ENCODE measurements at regions of chr19 and their contacts with region 1.

Region 1: DNA sequence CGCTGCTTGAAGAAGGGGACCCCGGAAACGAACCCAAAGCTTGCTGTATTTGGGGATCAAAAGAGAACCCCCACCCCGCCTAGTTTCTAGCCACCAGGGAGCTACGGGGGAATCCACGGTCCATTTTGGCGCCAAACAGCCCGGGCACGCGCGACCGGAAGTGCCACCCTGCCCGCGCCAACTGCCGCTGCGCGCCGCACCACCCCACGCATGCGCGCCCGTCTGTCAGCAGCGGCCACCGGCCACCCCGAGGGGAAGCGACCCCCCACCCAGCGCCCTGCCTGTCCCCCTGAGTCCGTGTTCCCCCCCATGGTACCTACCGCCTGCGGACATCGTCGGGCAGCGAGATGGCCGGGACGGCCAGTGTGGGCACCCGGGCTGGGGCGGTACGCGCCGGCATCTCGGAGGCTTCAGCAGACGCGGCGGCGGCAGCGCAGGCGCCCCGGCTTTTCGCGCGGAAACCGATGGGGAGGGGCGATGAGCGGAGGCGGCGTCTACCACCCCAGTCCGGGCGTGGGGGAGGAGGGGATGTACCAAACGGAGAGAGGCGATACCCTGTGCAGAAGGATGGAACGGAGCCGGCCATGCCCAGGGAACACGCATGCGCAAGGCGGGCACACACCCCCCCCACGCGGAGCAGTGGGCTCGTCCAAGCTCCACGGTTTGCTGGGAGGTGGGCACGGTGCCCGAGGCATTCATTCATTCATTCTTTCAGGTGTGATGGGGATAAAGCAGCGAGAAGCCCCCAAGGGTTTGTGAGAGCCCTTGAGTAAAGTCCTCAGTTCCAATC is at the start of gene DNMT1:
- DNase-seq: peak; percentile 94 to 98 (median 97)
- H3K4me3 ChIP-seq: peak within 1 kb of the TSS; percentile 18 to 95 (median 82)
- H3K27ac ChIP-seq: peak within 1 kb of the TSS; percentile 19 to 90 (median 67)
- H3K4me1 ChIP-seq: peaks cover 0 to 10% of the 10 kb centered on the region in 2 donors
- H3K27me3 ChIP-seq: no peaks in the 10 kb centered on the region
- CTCF ChIP-seq: peak in 1 of 6 experiments; percentile 3
- POLR2A ChIP-seq: peak; percentile 26 to 66
- total RNA-seq, gene DNMT1: 23.6 to 48.2 (median 33.8) TPM

Region 2: GRCh38 chr19:10135551-10136334 is 59.0 kb before region 1 on chr19:
- intact Hi-C with region 1: no loop called
- DNase-seq: no peak
- H3K4me3 ChIP-seq: no peak overlapping the region
- H3K27ac ChIP-seq: no peak overlapping the region
- H3K4me1 ChIP-seq: no peaks in the 10 kb centered on the region
- H3K27me3 ChIP-seq: no peaks in the 10 kb centered on the region
- CTCF ChIP-seq: no peak
- POLR2A ChIP-seq: no peak

Region 3: GRCh38 chr19:10230861-10231611 is 36.3 kb after region 1 on chr19 and contains the start of gene S1PR2:
- intact Hi-C with region 1: loop called in 1 of 2 experiments (anchors 5 kb)
- DNase-seq: peak; percentile 62 to 77 (median 70)
- H3K4me3 ChIP-seq: peak within 1 kb of the TSS; percentile 70 to 78 (median 72)
- H3K27ac ChIP-seq: peak within 1 kb of the TSS in 4 of 5 donors; percentile 73 to 88 (median 86)
- H3K4me1 ChIP-seq: peaks cover 7 to 28% of the 10 kb centered on the region in 2 donors
- H3K27me3 ChIP-seq: no peaks in the 10 kb centered on the region
- CTCF ChIP-seq: no peak
- POLR2A ChIP-seq: peak; percentile 22 to 28
- total RNA-seq, gene S1PR2: 2.0 to 9.5 (median 6.2) TPM

Region 4: GRCh38 chr19:10245189-10245939 is 50.7 kb after region 1 on chr19:
- intact Hi-C with region 1: no loop called
- DNase-seq: no peak
- H3K4me3 ChIP-seq: no peak overlapping the region
- H3K27ac ChIP-seq: no peak overlapping the region
- H3K4me1 ChIP-seq: peaks cover 0 to 3% of the 10 kb centered on the region in 2 donors
- H3K27me3 ChIP-seq: no peaks in the 10 kb centered on the region
- CTCF ChIP-seq: no peak
- POLR2A ChIP-seq: no peak